Endothelial cell of umbilical vein (primary cell): ENCODE measurements at regions of chr16 and their contacts with region 1.

Region 1: DNA sequence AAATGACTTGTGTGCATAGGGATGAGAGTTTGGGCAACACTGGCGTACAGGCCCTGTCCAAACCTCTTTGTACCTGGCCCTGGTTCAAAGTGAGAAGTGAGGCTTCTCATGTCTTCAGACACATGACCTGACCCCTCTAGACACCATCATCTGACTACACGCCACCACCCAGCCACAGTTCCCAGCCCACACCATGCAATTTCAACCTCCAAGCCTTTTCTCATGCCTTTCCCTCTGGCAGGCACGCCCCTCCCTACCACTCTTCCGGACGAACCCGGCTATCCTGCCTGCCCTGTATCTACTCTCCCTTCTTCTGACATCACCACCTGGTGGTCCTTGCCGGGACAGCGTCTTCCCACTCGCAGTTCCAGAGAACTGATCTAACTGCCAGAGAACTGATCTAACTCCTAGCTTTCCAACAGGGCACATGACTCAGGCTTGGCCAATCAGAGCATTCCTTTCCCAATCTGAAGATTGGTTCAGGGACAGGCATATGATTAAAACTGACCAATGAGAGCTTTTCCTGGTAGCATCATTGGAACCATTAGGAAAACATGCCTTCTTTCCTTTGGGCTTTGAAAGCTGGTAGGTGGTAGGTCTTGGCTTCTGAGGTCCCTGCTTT is 27.1 kb upstream of the IL21R start:
- DNase-seq: peak; percentile 83
- H3K4me3 ChIP-seq: no peak overlapping the region
- H3K27ac ChIP-seq: no peak overlapping the region
- H3K4me1 ChIP-seq: no peaks in the 10 kb centered on the region
- H3K27me3 ChIP-seq: no peaks in the 10 kb centered on the region
- CTCF ChIP-seq: peak; percentile 67 to 69
- POLR2A ChIP-seq: no peak

Region 2: DNA sequence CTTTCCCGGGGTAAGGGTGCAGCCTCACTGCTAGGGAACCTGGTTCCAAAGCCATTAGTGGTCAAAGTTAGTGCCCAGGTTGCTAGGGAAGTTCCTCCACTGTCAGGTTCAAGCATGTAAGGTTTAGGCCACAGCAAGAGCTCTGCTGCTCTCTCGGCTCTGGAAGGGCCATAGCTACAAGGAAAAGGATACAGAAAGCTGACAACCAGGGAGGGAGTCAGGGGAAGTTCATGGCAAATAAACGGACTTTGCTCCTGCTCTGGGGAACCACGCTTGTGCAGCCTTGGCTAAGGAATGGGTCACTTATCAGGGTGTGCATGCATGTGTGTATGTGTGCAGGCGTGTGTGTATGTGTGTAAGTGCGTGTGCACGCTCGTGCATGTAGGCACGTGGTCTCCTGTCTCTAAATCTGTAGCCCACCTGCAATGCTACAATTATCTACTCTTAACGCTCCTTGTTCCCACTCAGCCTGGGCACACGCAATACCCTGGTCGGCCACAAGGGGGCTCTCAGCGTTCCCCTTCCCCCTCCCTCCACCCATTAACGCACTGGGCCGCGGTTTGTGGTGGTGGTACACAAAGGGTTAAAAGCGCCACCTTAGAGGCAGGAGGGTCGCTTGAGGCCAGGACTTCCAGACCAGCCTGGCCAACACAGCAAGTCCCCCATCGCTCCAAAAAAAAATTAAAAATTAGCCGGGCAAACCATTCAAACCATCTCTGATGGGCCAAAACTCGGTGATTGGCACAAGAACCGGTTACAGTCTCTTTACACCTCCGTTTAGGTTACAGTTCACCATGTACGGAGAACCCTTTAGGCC is 220.0 kb before region 1 on chr16:
- CTCF ChIA-PET with region 1: interaction called, 13 read pairs
- POLR2A ChIA-PET with region 1: no interaction called
- dilution Hi-C with region 1: no loop called
- intact Hi-C with region 1: loop called (anchors 1 kb)
- DNase-seq: peak; percentile 38
- H3K4me3 ChIP-seq: no peak overlapping the region
- H3K27ac ChIP-seq: no peak overlapping the region
- H3K4me1 ChIP-seq: no peaks in the 10 kb centered on the region
- H3K27me3 ChIP-seq: no peaks in the 10 kb centered on the region
- CTCF ChIP-seq: peak; percentile 94 to 96
- POLR2A ChIP-seq: no peak

Region 3: GRCh38 chr16:27335349-27336053 is 39.4 kb before region 1 on chr16:
- CTCF ChIA-PET with region 1: no interaction called
- POLR2A ChIA-PET with region 1: no interaction called
- dilution Hi-C with region 1: no loop called
- intact Hi-C with region 1: no loop called
- DNase-seq: peak; percentile 44
- H3K4me3 ChIP-seq: no peak overlapping the region
- H3K27ac ChIP-seq: peak overlapping the region; percentile 36
- H3K4me1 ChIP-seq: peaks cover 42% of the 10 kb centered on the region
- H3K27me3 ChIP-seq: no peaks in the 10 kb centered on the region
- CTCF ChIP-seq: no peak
- POLR2A ChIP-seq: no peak

Region 4: GRCh38 chr16:27461483-27462171 is 86.7 kb after region 1 on chr16:
- CTCF ChIA-PET with region 1: no interaction called
- POLR2A ChIA-PET with region 1: no interaction called
- dilution Hi-C with region 1: no loop called
- intact Hi-C with region 1: loop called (anchors 1 kb)
- DNase-seq: peak; percentile 69
- H3K4me3 ChIP-seq: no peak overlapping the region
- H3K27ac ChIP-seq: peak overlapping the region; percentile 61
- H3K4me1 ChIP-seq: peaks cover 16% of the 10 kb centered on the region
- H3K27me3 ChIP-seq: no peaks in the 10 kb centered on the region
- CTCF ChIP-seq: no peak
- POLR2A ChIP-seq: no peak